OCI-LY7 (cell line): ENCODE measurements at regions of chr11 and their contacts with region 1.

Region 1: DNA sequence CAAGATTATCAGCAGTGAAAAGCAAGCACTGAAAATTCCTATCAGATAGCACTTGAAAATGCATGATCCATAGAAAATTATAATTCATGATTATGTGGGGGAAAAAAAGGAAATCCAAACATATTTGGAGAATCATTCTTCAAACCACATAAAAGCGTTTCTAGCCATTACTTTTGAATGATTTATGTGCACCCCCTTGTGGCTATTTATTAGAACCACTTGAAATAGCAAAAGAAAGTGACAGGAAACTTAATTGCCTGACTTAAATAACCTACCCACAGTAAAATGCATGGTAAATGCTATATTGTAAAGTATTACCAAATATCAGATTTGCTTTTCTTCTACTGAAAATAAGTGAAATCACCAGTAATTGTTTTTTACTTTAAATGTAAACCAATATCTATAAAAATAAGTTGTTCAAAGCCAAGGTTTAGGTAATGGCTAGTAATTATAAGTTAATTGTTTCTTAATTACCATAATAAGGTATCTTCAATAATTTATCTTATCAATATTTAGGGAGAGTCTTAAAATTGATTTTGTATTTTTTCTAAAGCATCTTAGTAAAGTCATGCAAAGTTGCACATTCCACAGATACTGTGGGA is 168.5 kb downstream of the ARHGAP42 start:
- DNase-seq: peak; percentile 39
- H3K4me3 ChIP-seq: no peak overlapping the region
- H3K27ac ChIP-seq: no peak overlapping the region
- H3K4me1 ChIP-seq: no peaks in the 10 kb centered on the region
- CTCF ChIP-seq: peak; percentile 79

Region 2: DNA sequence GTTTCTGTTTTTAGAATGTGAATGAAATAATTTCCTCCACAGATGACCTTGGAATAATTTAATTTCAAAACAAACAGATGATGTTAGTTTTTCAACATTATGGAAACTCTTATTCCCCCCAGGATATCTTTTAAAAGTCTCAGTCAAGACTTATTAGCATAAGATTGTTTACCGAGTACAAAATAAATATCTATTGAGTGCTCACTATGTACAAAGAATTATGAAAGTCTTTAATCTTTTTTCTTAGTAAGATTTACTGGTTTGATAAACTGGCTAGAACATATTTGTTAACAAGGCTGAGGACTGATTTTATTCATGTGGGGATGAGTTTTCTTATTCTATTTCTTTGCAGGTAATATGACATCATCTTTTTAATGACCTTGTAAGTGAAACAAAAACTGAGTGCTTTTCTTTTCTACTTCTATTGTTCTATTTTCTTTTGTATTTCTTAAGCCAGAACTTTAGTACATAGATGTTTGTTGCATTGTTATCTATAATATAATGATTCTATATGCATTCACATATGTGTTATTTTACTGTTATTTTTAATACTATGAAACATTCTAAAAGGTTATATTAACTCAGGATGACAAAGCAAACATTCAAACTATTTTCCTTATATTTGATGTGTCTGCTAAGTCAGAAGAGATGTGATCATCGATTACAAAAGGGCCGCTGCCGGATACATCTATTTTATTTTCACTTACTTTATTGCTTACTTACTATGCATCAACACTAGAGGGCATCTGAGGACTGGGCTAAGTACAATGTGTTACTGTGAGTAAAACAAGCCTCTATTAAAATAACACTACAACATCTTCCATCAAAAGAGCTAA is 279.5 kb before region 1 on chr11:
- CTCF ChIA-PET with region 1: no interaction called
- POLR2A ChIA-PET with region 1: no interaction called
- intact Hi-C with region 1: loop called (anchors 2 kb)
- DNase-seq: peak; percentile 44
- H3K4me3 ChIP-seq: no peak overlapping the region
- H3K27ac ChIP-seq: no peak overlapping the region
- H3K4me1 ChIP-seq: no peaks in the 10 kb centered on the region
- CTCF ChIP-seq: peak; percentile 90

Region 3: DNA sequence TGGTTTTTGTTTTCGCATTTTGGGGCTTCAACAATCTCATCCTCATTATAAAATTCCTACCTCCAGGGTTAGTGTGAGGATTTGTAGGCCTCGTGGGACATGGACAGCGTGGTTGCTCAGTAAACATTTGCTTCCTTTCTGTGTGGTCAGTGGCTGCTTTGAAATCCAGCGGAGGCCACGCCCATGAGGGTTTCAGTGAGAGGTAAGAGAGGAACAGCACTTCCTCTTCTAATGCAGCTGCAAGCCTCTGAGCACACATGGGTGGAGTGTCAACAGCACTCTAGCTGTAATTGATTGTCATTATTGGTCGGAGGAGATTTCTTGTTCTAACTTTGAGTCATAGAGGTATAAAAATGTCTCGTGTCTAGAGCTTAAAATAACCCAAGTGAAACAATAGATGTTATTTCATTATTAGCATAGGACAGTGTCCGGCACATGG is 174.5 kb before region 1 on chr11:
- CTCF ChIA-PET with region 1: no interaction called
- POLR2A ChIA-PET with region 1: no interaction called
- intact Hi-C with region 1: loop called (anchors 2 kb)
- DNase-seq: peak; percentile 56
- H3K4me3 ChIP-seq: no peak overlapping the region
- H3K27ac ChIP-seq: no peak overlapping the region
- H3K4me1 ChIP-seq: no peaks in the 10 kb centered on the region
- CTCF ChIP-seq: no peak